GM10248 (cell line): ENCODE measurements at regions of chr1 and their contacts with region 1.

Region 1: GRCh38 chr1:162056043-162056442 is 13.4 kb upstream of the NOS1AP start:
- DNase-seq: peak; percentile 62
- CTCF ChIP-seq: peak; percentile 78

Region 2: DNA sequence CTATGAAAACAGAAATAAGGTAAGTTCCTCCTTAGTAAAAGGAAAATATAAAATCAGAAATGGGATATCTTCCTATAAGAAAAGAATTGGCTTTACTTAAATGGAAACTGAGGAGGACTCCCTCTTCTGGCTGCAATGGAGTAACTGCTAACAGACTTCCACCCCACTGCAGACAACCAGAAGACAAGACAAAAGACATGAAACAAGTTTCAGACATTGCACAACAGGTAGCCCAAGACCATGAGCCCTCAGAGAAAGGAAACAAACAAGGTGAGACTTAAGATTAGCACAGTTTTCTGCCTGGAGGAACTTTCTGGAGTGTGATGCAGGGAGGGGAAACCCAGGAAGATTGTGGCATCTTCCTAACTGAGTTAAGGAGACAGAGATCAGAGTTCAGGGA is 15.4 kb before region 1 on chr1:
- CTCF ChIA-PET with region 1: interaction called, 53 read pairs
- POLR2A ChIA-PET with region 1: no interaction called
- DNase-seq: no peak
- CTCF ChIP-seq: peak; percentile 25

Region 3: DNA sequence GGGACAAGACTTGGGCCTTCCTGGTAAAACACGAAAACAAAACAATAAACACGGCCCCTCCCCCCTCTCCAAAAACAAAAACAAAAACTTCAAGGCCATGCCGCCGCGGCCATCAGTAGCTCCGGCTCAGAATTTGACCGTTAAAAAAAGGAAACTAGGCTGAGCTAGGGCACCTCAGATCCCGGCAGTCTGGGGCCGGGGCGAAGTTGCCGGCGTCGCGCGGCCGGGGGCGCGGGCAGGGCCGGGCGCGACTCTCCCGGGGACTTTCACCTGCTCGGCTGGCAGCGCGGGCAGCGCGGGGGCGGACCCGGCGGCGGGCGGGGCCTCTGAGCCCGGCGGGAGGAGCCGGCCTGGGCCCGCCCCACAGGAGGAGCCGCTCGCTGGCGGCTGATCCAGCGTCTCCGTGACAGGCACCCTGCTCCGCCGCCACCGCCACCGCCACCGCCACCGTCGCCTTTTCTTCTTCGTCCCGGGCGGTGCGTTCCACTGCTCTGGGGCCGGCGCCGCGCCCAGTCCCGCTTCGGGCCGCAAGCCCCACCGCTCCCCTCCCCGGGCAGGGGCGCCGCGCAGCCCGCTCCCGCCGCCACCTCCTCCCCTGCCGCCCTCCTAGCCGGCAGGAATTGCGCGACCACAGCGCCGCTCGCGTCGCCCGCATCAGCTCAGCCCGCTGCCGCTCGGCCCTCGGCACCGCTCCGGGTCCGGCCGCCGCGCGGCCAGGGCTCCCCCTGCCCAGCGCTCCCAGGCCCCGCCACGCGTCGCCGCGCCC is 13.5 kb after region 1 on chr1 and contains the start of gene NOS1AP:
- CTCF ChIA-PET with region 1: interaction called, 13 read pairs
- POLR2A ChIA-PET with region 1: no interaction called
- DNase-seq: peak; percentile 92
- CTCF ChIP-seq: no peak

Region 4: DNA sequence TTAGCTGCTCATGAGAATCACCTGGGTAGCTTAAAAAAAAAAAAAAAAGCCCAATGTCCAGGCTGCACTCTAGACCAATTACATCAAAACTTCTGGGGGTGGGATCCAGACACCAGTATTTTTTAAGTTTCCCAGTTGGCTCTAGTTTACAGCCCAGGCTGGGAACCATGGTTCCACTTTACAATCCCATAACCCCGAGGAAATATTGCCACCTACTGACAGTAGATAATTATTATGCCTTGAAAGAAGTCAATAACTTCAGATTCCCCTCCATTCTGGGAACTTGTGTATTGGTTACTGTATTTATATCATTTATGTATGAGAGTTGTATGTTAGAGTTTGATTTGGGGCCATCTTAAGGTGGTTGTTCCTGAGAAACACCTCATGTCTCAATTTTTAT is 220.4 kb after region 1 on chr1:
- CTCF ChIA-PET with region 1: interaction called, 28 read pairs
- POLR2A ChIA-PET with region 1: no interaction called
- DNase-seq: peak; percentile 39
- CTCF ChIP-seq: peak; percentile 32

Region 5: DNA sequence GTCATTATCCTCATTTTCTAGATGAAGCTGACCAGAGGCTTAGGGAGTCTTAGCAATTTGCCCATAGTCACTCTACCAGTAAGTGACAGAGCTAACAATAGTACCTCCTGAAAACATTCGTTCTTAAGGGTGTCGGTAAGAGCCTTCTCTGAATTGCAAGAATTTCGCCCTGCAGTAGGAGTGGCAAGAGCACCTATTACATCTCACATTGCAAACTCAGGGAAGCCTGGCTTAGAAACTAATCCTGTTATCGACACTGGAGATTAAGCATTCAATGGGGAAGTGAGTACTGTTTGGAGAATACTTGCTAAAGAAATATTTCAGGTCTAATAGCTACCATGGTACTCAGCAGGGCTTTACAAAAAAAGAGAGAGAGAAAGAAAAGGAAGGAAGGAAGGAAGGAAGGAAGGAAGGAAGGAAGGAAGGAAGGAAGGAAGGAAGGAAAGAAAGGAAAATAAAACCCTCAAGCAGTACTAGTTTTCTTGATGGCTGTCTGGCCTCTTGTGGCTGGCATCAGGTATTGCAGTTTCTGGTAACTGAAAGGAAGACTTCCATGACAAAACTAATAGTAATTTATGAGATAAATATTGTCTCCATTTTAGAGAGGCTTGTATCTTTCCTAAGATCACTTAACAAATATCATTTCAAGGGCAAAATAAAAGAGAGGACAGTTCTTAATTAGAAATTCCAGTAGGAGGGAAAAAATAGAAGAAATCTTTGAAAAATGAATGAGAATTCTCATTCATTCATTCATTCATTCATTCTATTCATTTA is 335.9 kb after region 1 on chr1:
- CTCF ChIA-PET with region 1: interaction called, 26 read pairs
- POLR2A ChIA-PET with region 1: no interaction called
- DNase-seq: peak; percentile 51
- CTCF ChIP-seq: peak; percentile 80